Dendritic cell treated with granulocyte-macrophage colony-stimulating factor and Interleukin-4, amounts not matched to agents 40 ng/mL and 50 ng/mL, for 4 days (primary cell): ENCODE measurements at regions of chr1 and their contacts with region 1.

Region 1: DNA sequence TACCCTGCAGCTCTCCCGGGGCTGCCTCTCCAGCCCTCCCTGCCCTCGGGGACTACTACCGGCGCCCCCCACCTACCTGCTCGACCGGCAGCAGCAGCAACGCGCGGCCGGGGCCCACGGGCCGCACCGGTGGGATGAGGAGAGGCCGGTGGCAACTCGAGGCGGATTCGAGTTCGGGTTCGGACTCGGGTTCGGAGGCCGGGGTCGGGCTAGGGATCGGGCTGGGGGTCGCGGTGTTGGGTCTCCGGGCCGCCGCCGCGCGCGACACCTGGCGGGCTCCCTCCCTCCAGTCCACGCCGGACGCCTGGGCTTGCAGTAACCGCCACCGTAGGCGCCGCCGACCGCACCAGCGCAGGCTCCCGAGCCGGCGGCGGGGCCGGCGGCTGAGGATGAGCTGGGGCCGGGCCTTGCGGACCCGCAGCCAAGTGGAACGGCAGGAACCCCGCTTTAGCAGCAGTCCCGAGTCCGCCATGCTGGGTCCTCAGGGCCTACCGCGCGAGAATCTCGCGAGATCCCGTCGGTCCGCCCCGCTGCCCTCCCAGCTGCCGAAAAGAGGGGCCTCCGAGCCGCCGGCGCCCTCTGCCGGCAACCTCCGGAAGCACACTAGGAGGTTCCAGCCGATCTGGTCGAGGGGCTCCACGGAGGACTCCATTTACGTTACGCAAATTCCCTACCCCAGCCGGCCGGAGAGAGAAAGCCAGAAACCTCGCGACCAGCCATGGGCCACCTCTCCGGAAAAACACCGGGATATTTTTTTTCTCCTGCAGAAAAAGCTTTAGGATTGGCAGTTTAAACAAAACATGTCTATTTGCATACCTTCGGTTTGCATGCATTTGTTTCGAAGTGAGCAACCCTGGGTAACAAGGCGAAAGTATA is at the start of gene NOL9:
- H3K4me3 Mint-ChIP-seq: peak within 1 kb of the TSS; percentile 76
- H3K27ac Mint-ChIP-seq: peak within 1 kb of the TSS; percentile 60
- H3K4me1 Mint-ChIP-seq: peaks cover 16% of the 10 kb centered on the region
- H3K27me3 Mint-ChIP-seq: no peaks in the 10 kb centered on the region

Region 2: DNA sequence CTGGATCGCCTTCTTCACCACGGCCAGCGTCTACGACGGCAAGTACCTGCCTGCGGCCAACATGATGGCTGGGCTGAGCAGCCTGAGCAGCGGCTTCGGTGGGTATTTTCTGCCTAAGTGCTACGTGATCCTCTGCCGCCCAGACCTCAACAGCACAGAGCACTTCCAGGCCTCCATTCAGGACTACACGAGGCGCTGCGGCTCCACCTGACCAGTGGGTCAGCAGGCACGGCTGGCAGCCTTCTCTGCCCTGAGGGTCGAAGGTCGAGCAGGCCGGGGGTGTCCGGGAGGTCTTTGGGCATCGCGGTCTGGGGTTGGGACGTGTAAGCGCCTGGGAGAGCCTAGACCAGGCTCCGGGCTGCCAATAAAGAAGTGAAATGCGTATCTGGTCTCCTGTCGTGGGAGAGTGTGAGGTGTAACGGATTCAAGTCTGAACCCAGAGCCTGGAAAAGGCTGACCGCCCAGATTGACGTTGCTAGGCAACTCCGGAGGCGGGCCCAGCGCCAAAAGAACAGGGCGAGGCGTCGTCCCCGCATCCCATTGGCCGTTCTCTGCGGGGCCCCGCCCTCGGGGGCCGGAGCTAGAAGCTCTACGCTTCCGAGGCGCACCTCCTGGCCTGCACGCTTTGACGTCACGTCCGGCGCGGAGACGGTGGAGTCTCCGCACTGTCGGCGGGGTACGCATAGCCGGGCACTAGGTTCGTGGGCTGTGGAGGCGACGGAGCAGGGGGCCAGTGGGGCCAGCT is 25.3 kb after region 1 on chr1 and contains the start of gene ZBTB48:
- intact Hi-C with region 1: loop called (anchors 1 kb)
- H3K4me3 Mint-ChIP-seq: peak within 1 kb of the TSS; percentile 100
- H3K27ac Mint-ChIP-seq: peak within 1 kb of the TSS; percentile 100
- H3K4me1 Mint-ChIP-seq: peaks cover 45% of the 10 kb centered on the region
- H3K27me3 Mint-ChIP-seq: no peaks in the 10 kb centered on the region

Region 3: DNA sequence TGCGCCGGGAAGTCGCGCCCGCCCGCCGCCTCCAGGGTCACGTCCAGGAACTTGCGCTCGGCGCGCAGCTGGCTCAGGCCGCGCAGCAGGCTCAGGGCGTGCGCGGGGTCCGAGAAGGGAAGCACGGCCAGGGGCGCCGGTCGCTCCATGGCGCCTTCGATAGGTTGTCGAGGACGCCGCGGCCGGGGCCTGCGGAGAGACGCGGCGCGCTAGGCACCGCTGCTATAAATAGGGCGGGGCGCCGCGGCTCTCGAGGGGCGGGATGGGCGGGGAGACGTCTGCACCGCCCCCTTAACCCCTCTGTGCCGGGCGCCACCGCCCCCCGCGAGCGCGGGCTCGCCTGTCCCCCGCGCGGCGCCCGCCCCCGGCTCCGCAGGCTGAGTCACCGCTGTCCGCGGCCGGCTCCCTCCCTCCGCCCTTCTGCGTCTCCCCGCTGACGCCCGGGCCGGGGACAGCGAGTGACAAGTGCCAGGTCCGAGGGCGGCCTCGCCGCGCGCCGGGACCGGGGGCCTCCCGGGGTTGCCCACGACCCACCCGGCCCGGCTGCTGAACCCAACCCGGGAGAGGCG is 48.5 kb after region 1 on chr1 and contains the start of gene KLHL21:
- intact Hi-C with region 1: loop called (anchors 5 kb)
- H3K4me3 Mint-ChIP-seq: peak within 1 kb of the TSS; percentile 92
- H3K27ac Mint-ChIP-seq: peak within 1 kb of the TSS; percentile 98
- H3K4me1 Mint-ChIP-seq: peaks cover 40% of the 10 kb centered on the region
- H3K27me3 Mint-ChIP-seq: peaks cover 3% of the 10 kb centered on the region

Region 4: DNA sequence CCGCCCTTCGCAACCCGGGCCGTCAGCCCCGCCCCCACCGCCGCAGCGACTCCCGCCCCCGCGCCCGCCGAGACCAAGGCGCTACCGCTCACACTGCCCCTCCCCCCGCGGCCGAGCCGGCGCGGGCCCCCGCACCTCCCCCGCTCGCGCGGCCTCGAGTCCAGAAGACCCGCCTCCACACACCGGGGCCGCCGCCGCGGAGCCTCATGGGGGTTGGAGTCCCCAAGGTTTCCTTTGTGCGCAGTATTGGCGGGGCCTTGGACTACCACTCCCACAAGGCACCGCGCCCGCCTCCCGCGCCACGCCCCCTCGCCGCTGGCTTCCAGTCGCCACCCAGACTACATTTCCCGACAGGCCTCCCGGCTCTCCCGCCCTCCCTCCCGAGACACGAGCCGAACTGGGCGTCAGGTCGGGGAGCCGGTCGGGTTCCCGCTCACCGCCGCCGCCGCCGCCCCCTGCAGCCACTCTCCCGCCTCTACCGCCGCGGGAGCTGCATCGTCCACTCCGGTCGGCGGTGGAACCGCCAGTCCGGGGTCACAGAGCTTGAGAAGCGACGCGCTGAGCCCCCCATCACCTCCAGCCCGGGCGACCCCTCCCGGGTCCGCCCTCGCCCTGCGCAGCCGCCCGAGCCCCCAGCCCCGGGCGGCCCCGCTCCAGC is 59.2 kb after region 1 on chr1 and contains the start of gene PHF13:
- intact Hi-C with region 1: loop called (anchors 1 kb)
- H3K4me3 Mint-ChIP-seq: peak within 1 kb of the TSS; percentile 92
- H3K27ac Mint-ChIP-seq: peak within 1 kb of the TSS; percentile 83
- H3K4me1 Mint-ChIP-seq: peaks cover 33% of the 10 kb centered on the region
- H3K27me3 Mint-ChIP-seq: peaks cover 8% of the 10 kb centered on the region